PC-9 (cell line): ENCODE measurements at regions of chr10 and their contacts with region 1.

Region 1: GRCh38 chr10:101042667-101043355 is 11.8 kb downstream of the SFXN3 start:
- DNase-seq: peak; percentile 87 to 93
- H3K4me3 ChIP-seq: peak overlapping the region; percentile 64
- H3K27ac ChIP-seq: peak overlapping the region; percentile 79
- H3K4me1 ChIP-seq: peaks cover 21% of the 10 kb centered on the region
- H3K27me3 ChIP-seq: no peaks in the 10 kb centered on the region
- CTCF ChIP-seq: no peak

Region 2: DNA sequence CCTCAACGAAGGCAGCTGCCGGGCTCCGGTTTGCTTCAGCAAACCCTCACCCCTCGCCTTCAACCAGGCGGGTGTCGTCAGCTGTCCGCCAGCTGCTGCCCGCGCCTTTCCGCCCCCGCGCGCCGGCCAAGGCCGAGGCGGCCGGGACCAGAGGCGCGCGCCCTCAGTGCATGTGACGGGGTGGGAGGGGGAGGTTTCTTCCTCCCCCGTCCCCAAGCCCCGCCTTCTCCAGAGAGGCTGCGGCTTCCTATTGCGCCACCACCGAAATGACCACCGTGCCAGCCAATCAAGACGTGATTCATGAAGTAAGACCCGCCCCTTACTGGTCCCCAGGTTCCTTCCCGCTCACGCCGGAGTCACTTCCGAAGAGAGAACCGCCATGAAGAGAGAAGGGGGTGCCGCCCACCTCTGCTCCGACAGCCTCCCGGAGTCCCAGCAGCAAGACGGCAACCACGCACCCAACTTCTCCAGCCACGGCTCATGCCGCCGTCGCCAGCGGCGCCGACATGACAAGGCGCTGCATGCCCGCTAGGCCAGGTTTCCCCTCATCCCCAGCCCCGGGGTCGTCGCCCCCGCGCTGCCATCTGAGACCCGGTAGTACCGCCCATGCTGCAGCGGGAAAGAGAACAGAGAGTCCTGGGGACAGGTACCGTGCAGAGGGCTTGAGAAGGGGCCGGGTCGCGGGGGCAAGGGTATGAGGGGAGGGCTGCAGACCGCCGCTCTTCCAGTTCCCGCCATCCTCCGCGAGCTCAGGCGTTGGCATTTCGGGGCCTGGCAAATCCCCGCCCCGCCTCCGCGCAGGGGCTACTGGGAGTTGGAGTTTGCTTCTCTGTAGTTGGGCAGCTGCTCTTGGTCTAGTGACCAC is 130.0 kb before region 1 on chr10 and contains the start of gene SLF2:
- CTCF ChIA-PET with region 1: no interaction called
- POLR2A ChIA-PET with region 1: no interaction called
- intact Hi-C with region 1: no loop called
- DNase-seq: peak; percentile 89 to 91
- H3K4me3 ChIP-seq: peak within 1 kb of the TSS; percentile 89
- H3K27ac ChIP-seq: no peak within 1 kb of the TSS
- H3K4me1 ChIP-seq: peaks cover 12% of the 10 kb centered on the region
- H3K27me3 ChIP-seq: no peaks in the 10 kb centered on the region
- CTCF ChIP-seq: no peak
- total RNA-seq, gene SLF2: 13.6 and 17.1 TPM in 2 replicates

Region 3: GRCh38 chr10:101018600-101019439 is 24.0 kb before region 1 on chr10:
- CTCF ChIA-PET with region 1: no interaction called
- POLR2A ChIA-PET with region 1: no interaction called
- intact Hi-C with region 1: no loop called
- DNase-seq: peak; percentile 58 to 81
- H3K4me3 ChIP-seq: no peak overlapping the region
- H3K27ac ChIP-seq: no peak overlapping the region
- H3K4me1 ChIP-seq: no peaks in the 10 kb centered on the region
- H3K27me3 ChIP-seq: no peaks in the 10 kb centered on the region
- CTCF ChIP-seq: peak; percentile 72

Region 4: DNA sequence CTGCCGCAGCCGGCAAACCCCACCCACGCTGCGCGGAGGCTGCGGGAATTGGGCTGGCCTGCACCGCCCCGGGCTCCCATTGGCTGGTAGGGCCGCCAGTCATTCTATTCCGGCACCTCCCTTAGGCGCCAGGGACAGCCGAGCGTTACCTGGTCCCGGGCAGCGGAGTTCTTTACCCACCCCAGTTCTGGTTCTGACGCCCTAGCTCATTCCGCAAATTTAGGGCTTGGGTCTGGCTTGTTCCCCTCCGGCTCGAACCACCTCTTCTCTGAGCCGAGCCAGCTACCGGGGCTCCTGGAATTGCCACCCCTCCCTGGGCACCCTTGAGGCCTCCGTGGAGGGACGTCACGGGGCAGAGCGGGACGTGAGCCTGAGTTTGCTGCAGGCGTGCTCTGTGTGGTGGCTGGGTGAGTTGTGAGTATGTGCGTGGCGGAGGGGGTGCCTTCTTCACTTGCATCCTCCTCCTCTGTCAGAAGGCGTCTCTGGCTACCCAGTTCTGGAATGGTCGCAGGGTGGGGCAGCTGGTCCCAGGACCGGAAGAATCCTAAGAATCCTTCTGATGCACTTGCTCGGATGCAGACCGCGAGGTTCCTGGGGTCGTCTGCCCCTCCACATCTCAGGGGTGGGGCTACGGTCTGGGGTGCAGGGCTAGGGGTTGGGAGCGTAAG is 11.5 kb before region 1 on chr10 and contains the starts of genes PDZD7 and SFXN3:
- CTCF ChIA-PET with region 1: interaction called, 17 read pairs
- POLR2A ChIA-PET with region 1: interaction called, 11 read pairs
- intact Hi-C with region 1: no loop called
- DNase-seq: peak; percentile 74 to 91
- H3K4me3 ChIP-seq: peak within 1 kb of the TSS; percentile 82
- H3K27ac ChIP-seq: peak within 1 kb of the TSS; percentile 52
- H3K4me1 ChIP-seq: peaks cover 15% of the 10 kb centered on the region
- H3K27me3 ChIP-seq: no peaks in the 10 kb centered on the region
- CTCF ChIP-seq: no peak
- total RNA-seq, gene PDZD7: 2.3 and 2.8 TPM in 2 replicates
- total RNA-seq, gene SFXN3: 30.6 and 35.2 TPM in 2 replicates

Region 5: DNA sequence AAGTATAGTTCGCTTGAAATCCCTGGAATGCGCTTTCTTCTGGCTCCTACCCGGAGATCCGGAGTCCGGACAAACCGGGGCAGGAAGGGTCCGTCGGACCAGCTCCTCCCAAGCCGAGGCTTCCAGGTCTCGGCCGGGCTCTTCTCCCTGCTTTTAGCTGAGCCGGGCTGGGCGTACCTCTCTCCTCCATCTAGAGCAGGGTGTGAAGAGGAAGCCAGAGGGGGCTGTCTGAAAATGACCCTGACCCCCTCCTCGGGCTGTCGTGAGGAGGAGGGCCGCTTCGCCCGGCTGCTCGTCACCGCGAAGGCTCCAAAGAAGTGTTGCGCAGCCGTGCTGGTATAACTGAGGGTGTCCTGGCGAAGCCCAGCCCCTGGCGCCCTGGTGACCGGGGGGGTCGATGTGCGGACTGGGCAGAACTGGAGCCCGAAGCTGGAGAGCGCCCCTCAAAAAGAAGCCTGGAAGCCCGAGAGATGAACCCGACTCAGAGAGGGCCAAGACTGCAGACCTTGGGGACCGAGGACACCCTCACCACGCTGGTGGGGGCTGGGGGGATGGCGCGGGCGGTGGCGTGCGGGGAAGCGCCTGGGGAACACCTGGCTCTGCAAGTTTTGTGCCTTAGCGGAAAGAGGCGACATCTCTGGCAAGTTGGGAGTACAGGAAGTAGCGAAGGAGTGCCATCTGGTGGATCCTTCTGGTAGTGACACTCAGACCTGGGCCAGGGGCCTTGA is 24.7 kb after region 1 on chr10:
- CTCF ChIA-PET with region 1: no interaction called
- POLR2A ChIA-PET with region 1: interaction called, 4 read pairs
- intact Hi-C with region 1: loop called (anchors 1 kb)
- DNase-seq: peak; percentile 70 to 75
- H3K4me3 ChIP-seq: peak overlapping the region; percentile 82
- H3K27ac ChIP-seq: no peak overlapping the region
- H3K4me1 ChIP-seq: peaks cover 16% of the 10 kb centered on the region
- H3K27me3 ChIP-seq: no peaks in the 10 kb centered on the region
- CTCF ChIP-seq: peak; percentile 74

Region 6: GRCh38 chr10:101123085-101123814 is 80.4 kb after region 1 on chr10:
- CTCF ChIA-PET with region 1: interaction called, 16 read pairs
- POLR2A ChIA-PET with region 1: no interaction called
- intact Hi-C with region 1: no loop called
- DNase-seq: peak in 1 of 2 experiments; percentile 9
- H3K4me3 ChIP-seq: no peak overlapping the region
- H3K27ac ChIP-seq: no peak overlapping the region
- H3K4me1 ChIP-seq: no peaks in the 10 kb centered on the region
- H3K27me3 ChIP-seq: peaks cover 72% of the 10 kb centered on the region
- CTCF ChIP-seq: no peak

Region 7: GRCh38 chr10:101141616-101142532 is 99.1 kb after region 1 on chr10:
- CTCF ChIA-PET with region 1: interaction called, 7 read pairs
- POLR2A ChIA-PET with region 1: no interaction called
- intact Hi-C with region 1: loop called (anchors 1 kb)
- DNase-seq: peak; percentile 36 to 70
- H3K4me3 ChIP-seq: no peak overlapping the region
- H3K27ac ChIP-seq: no peak overlapping the region
- H3K4me1 ChIP-seq: no peaks in the 10 kb centered on the region
- H3K27me3 ChIP-seq: peaks cover 15% of the 10 kb centered on the region; the same call in 1 of the 2 replicates
- CTCF ChIP-seq: peak; percentile 90

Region 8: GRCh38 chr10:101478956-101479355 is 436.1 kb after region 1 on chr10:
- CTCF ChIA-PET with region 1: interaction called, 15 read pairs
- POLR2A ChIA-PET with region 1: no interaction called
- intact Hi-C with region 1: no loop called
- DNase-seq: no peak
- H3K4me3 ChIP-seq: no peak overlapping the region
- H3K27ac ChIP-seq: no peak overlapping the region
- H3K4me1 ChIP-seq: no peaks in the 10 kb centered on the region
- H3K27me3 ChIP-seq: no peaks in the 10 kb centered on the region
- CTCF ChIP-seq: no peak

Region 9: GRCh38 chr10:101569838-101570766 is 527.3 kb after region 1 on chr10:
- CTCF ChIA-PET with region 1: no interaction called
- POLR2A ChIA-PET with region 1: no interaction called
- intact Hi-C with region 1: loop called (anchors 10 kb)
- DNase-seq: peak in 1 of 2 experiments; percentile 58
- H3K4me3 ChIP-seq: peak overlapping the region; percentile 68
- H3K27ac ChIP-seq: no peak overlapping the region
- H3K4me1 ChIP-seq: no peaks in the 10 kb centered on the region
- H3K27me3 ChIP-seq: peaks cover 15% of the 10 kb centered on the region
- CTCF ChIP-seq: peak; percentile 78